Activated naive CD8-positive, alpha-beta T cell treated with anti-CD3 and anti-CD28 coated beads, Interleukin-2, amount 10 ng/mL, durations not matched to agents 7 days and 5 days (primary cell): ENCODE measurements at regions of chr3 and their contacts with region 1.

Region 1: GRCh38 chr3:171491361-171491760 is 31.2 kb upstream of the TNIK start:
- DNase-seq: no peak
- ATAC-seq: peak; percentile 47
- H3K4me3 Mint-ChIP-seq: peak overlapping the region; percentile 77
- H3K27ac Mint-ChIP-seq: peak overlapping the region; percentile 83
- H3K4me1 Mint-ChIP-seq: peaks cover 33% of the 10 kb centered on the region
- H3K27me3 Mint-ChIP-seq: no peaks in the 10 kb centered on the region

Region 2: GRCh38 chr3:171459942-171460724 is 31.2 kb before region 1 on chr3 and contains the start of gene TNIK:
- POLR2A ChIA-PET with region 1: interaction called, 12 read pairs
- DNase-seq: peak; percentile 90
- ATAC-seq: peak; percentile 80
- H3K4me3 Mint-ChIP-seq: peak within 1 kb of the TSS; percentile 93
- H3K27ac Mint-ChIP-seq: peak within 1 kb of the TSS; percentile 91
- H3K4me1 Mint-ChIP-seq: peaks cover 36% of the 10 kb centered on the region
- H3K27me3 Mint-ChIP-seq: no peaks in the 10 kb centered on the region
- total RNA-seq, gene TNIK: 47.6 to 52.7 TPM